ENCODE measurements at regions of chr1 and their contacts with region 1.

Region 1: DNA sequence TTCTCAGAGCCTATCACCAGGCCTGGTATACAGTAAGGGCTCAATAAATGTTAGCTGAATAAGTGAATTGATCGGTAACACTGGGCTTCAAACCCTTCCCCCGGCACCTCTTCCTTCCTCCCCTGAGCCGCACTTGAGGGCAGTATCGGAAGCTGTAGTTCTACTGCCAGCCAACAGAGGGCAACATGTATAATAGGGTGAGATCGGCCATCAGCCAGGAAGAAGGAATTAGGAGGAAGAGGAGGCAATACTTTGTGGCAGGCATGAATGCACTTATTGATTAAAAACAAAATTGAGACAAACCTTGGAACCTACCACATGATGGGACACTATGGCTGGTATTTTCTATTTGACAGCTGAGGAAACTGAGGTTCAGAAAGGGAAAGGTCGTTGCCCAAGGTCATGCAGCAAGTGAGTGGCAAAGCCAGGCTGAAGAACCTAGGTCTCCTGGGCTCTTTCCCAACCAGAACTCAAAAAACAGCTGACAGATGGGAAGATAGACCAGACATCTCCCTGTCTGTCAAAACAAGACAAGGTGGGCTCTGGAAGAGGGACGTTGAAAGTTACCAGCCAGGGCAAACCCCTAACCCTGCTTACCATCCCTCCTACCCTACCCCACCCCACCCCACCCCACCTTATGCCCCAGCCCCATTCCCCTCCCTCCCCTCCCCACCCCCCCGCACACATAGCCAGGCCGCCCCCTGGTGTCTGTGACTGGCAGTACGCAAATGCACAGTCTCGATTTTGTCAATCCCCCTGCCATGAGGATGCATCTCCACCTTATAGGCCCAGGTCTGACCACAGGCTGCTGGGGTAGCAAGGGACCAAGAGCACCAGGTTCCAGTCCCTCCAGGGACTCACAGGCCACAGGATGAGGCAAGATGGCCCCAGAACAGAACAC is 107.3 kb upstream of the RUNX3 start:
- DNase-seq: peak; percentile 64
- ATAC-seq: peak; percentile 56
- H3K4me3 Mint-ChIP-seq: no peak overlapping the region
- H3K27ac Mint-ChIP-seq: peak overlapping the region; percentile 46
- H3K4me1 Mint-ChIP-seq: peaks cover 9% of the 10 kb centered on the region
- H3K27me3 Mint-ChIP-seq: no peaks in the 10 kb centered on the region
- CTCF ChIP-seq: no peak

Region 2: GRCh38 chr1:24847995-24848881 is 189.2 kb before region 1 on chr1:
- CTCF ChIA-PET with region 1: interaction called, 87 read pairs
- POLR2A ChIA-PET with region 1: interaction called, 16 read pairs
- intact Hi-C with region 1: loop called (anchors 1 kb)
- DNase-seq: peak; percentile 91
- ATAC-seq: peak; percentile 95
- H3K4me3 Mint-ChIP-seq: peak overlapping the region; percentile 74
- H3K27ac Mint-ChIP-seq: peak overlapping the region; percentile 50
- H3K4me1 Mint-ChIP-seq: peaks cover 18% of the 10 kb centered on the region
- H3K27me3 Mint-ChIP-seq: no peaks in the 10 kb centered on the region
- CTCF ChIP-seq: peak; percentile 54

Region 3: GRCh38 chr1:24905355-24905978 is 132.0 kb before region 1 on chr1:
- CTCF ChIA-PET with region 1: no interaction called
- POLR2A ChIA-PET with region 1: no interaction called
- intact Hi-C with region 1: no loop called
- DNase-seq: peak; percentile 3
- ATAC-seq: no peak
- H3K4me3 Mint-ChIP-seq: no peak overlapping the region
- H3K27ac Mint-ChIP-seq: no peak overlapping the region
- H3K4me1 Mint-ChIP-seq: peaks cover 7% of the 10 kb centered on the region
- H3K27me3 Mint-ChIP-seq: no peaks in the 10 kb centered on the region
- CTCF ChIP-seq: no peak

Region 4: GRCh38 chr1:24935615-24936484 is 101.6 kb before region 1 on chr1:
- CTCF ChIA-PET with region 1: interaction called, 195 read pairs
- POLR2A ChIA-PET with region 1: interaction called, 385 read pairs
- intact Hi-C with region 1: loop called (anchors 1 kb)
- DNase-seq: no peak
- ATAC-seq: no peak
- H3K4me3 Mint-ChIP-seq: peak overlapping the region; percentile 32
- H3K27ac Mint-ChIP-seq: peak overlapping the region; percentile 46
- H3K4me1 Mint-ChIP-seq: peaks cover 47% of the 10 kb centered on the region
- H3K27me3 Mint-ChIP-seq: no peaks in the 10 kb centered on the region
- CTCF ChIP-seq: no peak

Region 5: GRCh38 chr1:24955161-24955560 is 82.3 kb before region 1 on chr1:
- CTCF ChIA-PET with region 1: interaction called, 80 read pairs
- POLR2A ChIA-PET with region 1: interaction called, 42 read pairs
- intact Hi-C with region 1: loop called (anchors 1 kb)
- DNase-seq: no peak
- ATAC-seq: peak; percentile 76
- H3K4me3 Mint-ChIP-seq: peak overlapping the region; percentile 78
- H3K27ac Mint-ChIP-seq: peak overlapping the region; percentile 87
- H3K4me1 Mint-ChIP-seq: peaks cover 87% of the 10 kb centered on the region
- H3K27me3 Mint-ChIP-seq: no peaks in the 10 kb centered on the region
- CTCF ChIP-seq: no peak

Region 6: DNA sequence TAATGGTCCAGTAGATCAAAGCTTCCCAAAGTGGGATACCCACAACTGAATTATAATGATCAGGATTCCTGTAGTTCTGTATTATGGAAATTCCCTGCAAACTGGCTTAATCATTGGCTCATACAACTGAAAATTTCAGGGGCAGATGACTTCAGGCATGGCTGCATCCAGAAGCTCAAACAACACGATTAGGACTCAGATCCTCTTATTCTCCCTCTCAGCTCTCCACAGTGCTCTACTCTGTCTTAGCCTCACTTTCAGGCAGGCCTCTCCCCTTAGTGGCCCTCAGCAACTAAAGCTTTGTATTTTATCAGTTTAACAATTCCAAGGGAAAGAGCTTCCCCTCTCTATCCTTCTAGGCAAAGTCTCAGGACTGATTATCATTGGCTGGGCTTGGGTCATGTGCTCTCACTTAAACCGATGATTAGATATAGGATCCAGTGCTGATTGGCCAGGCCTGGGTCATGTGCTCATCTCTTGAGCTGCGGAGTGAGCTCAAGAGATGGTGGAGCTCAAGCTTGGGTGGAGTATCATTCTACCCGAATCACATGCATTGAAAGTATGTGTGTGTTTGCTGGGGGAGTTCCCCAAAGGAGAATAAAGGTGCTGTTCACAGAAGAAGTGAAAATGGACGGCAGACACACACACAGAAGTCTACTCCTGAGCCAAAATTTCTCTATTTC is 49.4 kb before region 1 on chr1:
- CTCF ChIA-PET with region 1: interaction called, 11 read pairs
- POLR2A ChIA-PET with region 1: interaction called, 24 read pairs
- intact Hi-C with region 1: loop called (anchors 1 kb)
- DNase-seq: no peak
- ATAC-seq: peak; percentile 92
- H3K4me3 Mint-ChIP-seq: peak overlapping the region; percentile 61
- H3K27ac Mint-ChIP-seq: peak overlapping the region; percentile 85
- H3K4me1 Mint-ChIP-seq: peaks cover 34% of the 10 kb centered on the region
- H3K27me3 Mint-ChIP-seq: no peaks in the 10 kb centered on the region
- CTCF ChIP-seq: no peak

Region 7: DNA sequence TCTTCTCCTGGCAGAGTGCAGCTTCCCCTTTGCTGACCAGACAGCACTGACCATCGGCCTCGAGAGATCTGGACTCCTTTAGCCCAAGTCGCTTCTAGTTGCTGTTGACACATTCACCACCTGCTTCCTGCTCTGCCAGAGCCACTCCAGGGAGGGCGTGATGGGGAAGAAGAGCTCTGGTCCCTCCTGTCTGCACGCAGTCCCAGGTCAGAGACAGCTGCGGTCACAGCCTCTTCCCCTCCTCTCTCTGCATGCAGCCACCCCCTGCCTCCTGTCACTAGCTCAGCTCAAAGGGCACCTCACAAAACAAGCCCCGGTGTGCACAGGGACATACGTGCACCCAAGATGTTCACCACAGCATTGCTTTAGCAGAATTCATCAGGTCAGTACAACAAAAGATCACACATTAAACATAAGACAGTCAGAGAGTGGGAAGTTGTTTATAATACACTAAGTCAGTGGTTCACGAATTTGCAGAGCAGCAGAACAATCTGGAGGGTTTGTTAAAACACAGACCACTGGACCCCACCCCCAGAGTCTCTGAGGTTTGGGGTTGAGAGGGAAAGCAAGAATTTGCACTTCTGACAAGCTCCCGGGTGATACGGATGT is 62.0 kb after region 1 on chr1:
- CTCF ChIA-PET with region 1: interaction called, 24 read pairs
- POLR2A ChIA-PET with region 1: no interaction called
- intact Hi-C with region 1: loop called (anchors 2 kb)
- DNase-seq: no peak
- ATAC-seq: peak; percentile 18
- H3K4me3 Mint-ChIP-seq: no peak overlapping the region
- H3K27ac Mint-ChIP-seq: no peak overlapping the region
- H3K4me1 Mint-ChIP-seq: peaks cover 40% of the 10 kb centered on the region
- H3K27me3 Mint-ChIP-seq: no peaks in the 10 kb centered on the region
- CTCF ChIP-seq: no peak

Region 8: DNA sequence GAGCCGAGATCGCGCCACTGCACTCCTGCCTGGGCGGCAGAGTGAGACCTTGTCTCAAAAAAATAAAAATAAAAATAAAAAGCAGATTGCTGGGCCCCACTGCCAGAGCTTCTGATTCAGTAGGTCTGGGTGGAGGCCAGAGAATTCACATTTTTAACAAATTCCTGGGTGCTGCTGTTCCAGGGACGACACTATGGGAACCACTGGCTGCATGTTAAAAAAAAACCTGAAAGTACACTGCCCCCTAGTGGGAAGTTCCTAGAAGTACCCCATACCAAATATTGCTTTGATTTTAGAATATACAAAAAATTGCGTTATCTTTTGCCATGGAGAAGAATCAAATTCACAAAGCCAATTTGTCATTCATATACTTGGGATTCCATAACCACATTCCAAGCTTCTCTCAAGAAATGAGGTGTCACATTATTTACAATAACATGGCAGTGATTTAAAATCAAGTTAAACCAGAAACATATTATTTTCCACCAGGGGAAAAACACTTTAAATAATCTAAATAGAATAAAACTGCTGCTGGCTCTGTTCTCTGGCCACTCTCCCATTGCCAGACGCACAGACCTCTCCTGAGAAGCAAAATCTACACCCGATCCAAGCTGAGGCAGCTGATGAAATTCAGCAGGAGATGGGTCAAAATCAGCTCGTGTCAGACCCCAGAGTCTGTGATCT is 167.5 kb after region 1 on chr1:
- CTCF ChIA-PET with region 1: interaction called, 14 read pairs
- POLR2A ChIA-PET with region 1: no interaction called
- intact Hi-C with region 1: loop called (anchors 2 kb)
- DNase-seq: no peak
- ATAC-seq: peak; percentile 47
- H3K4me3 Mint-ChIP-seq: no peak overlapping the region
- H3K27ac Mint-ChIP-seq: no peak overlapping the region
- H3K4me1 Mint-ChIP-seq: no peaks in the 10 kb centered on the region
- H3K27me3 Mint-ChIP-seq: peaks cover 2% of the 10 kb centered on the region
- CTCF ChIP-seq: no peak

Measured in activated B cell treated with CpG ODN at 0.5 μM for 24 hours (primary cell).